Activated CD8-positive, alpha-beta T cell treated with anti-CD3 and anti-CD28 coated beads, Interleukin-2, amount 10 ng/mL, durations not matched to agents 7 days and 5 days (primary cell): ENCODE measurements at regions of chr2 and their contacts with region 1.

Region 1: GRCh38 chr2:96856776-96857673 is 791 bp downstream of the ANKRD39 start:
- DNase-seq: peak; percentile 56
- ATAC-seq: peak; percentile 4
- H3K4me3 Mint-ChIP-seq: peak overlapping the region; percentile 88
- H3K27ac Mint-ChIP-seq: peak overlapping the region; percentile 82
- H3K4me1 Mint-ChIP-seq: peaks cover 45% of the 10 kb centered on the region
- H3K27me3 Mint-ChIP-seq: no peaks in the 10 kb centered on the region

Region 2: GRCh38 chr2:96839293-96839874 is 17.6 kb before region 1 on chr2:
- CTCF ChIA-PET with region 1: interaction called, 11 read pairs
- POLR2A ChIA-PET with region 1: interaction called, 12 read pairs
- DNase-seq: peak; percentile 90
- ATAC-seq: peak; percentile 94
- H3K4me3 Mint-ChIP-seq: peak overlapping the region; percentile 56
- H3K27ac Mint-ChIP-seq: peak overlapping the region; percentile 81
- H3K4me1 Mint-ChIP-seq: peaks cover 29% of the 10 kb centered on the region
- H3K27me3 Mint-ChIP-seq: no peaks in the 10 kb centered on the region

Region 3: DNA sequence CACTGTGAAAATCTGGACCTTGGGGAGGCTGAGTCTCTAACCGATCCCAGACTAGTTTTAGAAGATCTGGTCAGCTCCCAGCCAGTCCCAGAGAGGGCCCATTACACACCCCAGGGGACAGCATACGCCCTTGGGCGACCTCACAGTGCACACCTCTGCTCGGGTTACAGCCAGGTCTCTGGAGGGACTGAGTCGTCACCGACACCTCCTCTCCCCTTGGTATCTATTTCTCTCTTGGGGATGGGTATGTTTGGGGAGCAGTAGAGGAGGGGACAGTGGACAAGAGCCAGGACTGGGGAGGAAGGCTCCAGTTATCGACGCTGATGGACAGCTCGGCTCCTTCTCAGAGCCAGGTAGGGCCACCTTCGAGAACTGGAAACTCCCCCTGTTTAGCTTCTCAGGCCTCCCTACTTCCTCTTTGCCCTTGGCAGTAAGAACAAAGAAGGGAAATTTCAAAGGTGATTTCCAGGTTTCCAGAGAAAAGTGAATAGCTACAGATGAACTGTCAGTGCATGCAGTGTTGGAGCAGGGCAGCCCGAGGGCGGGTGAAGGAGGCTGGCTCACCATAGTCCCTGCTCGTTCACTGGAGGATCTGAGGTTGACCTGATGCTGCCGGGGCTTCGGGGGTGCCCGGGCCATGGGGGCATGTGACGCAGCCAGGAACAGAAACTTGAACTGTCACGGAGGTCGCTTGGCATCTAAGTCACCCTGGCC is 17.2 kb after region 1 on chr2:
- CTCF ChIA-PET with region 1: interaction called, 39 read pairs
- POLR2A ChIA-PET with region 1: interaction called, 9 read pairs
- DNase-seq: no peak
- ATAC-seq: no peak
- H3K4me3 Mint-ChIP-seq: no peak overlapping the region
- H3K27ac Mint-ChIP-seq: no peak overlapping the region
- H3K4me1 Mint-ChIP-seq: peaks cover 32% of the 10 kb centered on the region
- H3K27me3 Mint-ChIP-seq: peaks cover 4% of the 10 kb centered on the region

Region 4: GRCh38 chr2:96923810-96924774 is 67.1 kb after region 1 on chr2:
- CTCF ChIA-PET with region 1: interaction called, 16 read pairs
- POLR2A ChIA-PET with region 1: interaction called, 4 read pairs
- DNase-seq: peak; percentile 57
- ATAC-seq: peak; percentile 69
- H3K4me3 Mint-ChIP-seq: peak overlapping the region; percentile 74
- H3K27ac Mint-ChIP-seq: peak overlapping the region; percentile 93
- H3K4me1 Mint-ChIP-seq: peaks cover 46% of the 10 kb centered on the region
- H3K27me3 Mint-ChIP-seq: no peaks in the 10 kb centered on the region

Region 5: DNA sequence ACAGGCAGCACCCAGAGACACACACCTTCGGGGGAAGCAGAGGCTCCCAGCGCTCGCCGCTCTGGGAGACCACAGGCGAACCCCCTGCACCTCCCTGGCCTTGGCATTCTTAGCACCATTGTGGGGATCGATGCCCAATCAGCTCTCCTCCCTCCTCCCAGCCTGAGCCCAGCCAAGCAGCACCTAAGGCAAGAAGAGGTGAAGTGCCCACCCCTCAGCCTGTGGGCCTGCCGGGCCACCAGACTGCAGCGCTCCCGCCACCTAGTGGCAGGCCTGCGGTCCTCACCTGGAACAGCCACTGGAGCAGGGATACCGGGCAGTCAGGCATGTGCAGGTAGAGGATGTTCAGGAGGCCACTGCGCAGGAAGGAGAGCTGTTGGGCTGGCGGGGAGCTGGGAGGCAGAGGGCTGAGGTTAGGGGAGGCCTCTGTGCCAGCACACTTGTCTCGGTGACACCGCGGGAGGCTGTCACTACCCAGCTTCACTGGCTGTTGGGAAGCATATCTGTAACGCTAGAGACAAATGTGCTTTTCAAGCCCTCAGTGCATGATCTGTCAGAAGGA is 94.1 kb after region 1 on chr2:
- CTCF ChIA-PET with region 1: interaction called, 253 read pairs
- POLR2A ChIA-PET with region 1: interaction called, 14 read pairs
- DNase-seq: peak; percentile 82
- ATAC-seq: peak; percentile 93
- H3K4me3 Mint-ChIP-seq: no peak overlapping the region
- H3K27ac Mint-ChIP-seq: no peak overlapping the region
- H3K4me1 Mint-ChIP-seq: peaks cover 37% of the 10 kb centered on the region
- H3K27me3 Mint-ChIP-seq: peaks cover 3% of the 10 kb centered on the region

Region 6: GRCh38 chr2:97011977-97012565 is 155.0 kb after region 1 on chr2:
- CTCF ChIA-PET with region 1: interaction called, 12 read pairs
- POLR2A ChIA-PET with region 1: no interaction called
- DNase-seq: peak; percentile 69
- ATAC-seq: no peak
- H3K4me3 Mint-ChIP-seq: no peak overlapping the region
- H3K27ac Mint-ChIP-seq: no peak overlapping the region
- H3K4me1 Mint-ChIP-seq: peaks cover 3% of the 10 kb centered on the region
- H3K27me3 Mint-ChIP-seq: peaks cover 45% of the 10 kb centered on the region